CD4-positive, alpha-beta T cell (primary cell): ENCODE measurements at regions of chr11 and their contacts with region 1.

Region 1: DNA sequence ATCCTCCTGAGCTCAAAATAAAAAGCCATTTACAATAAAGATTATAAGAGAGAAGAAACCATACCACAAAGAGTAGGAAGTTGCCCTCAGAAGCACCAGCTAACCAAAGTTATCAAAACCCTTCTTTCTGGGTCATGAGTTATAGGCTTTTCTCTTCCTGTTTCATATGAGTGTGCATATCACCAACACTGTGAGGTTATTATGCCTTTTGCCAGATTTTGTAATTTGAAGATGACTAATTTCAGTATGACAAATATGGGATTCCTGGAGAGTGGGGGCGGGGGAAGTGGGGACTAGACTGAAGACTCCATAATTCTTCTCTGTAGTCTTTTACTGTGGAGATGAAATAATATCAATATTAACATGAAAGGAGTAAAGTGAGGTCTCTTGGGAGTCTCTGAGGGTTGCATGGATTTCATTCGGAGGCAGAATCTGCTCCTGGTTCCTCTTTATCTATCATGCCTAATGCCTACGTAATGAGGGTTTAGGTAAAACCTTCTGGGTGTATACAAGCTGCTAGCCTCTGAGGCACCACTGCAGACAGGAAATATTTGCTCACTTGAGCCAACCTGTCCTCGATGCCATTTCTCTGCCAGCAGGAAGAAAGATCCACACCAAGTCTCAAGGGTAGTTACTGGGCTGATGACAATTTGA is 2.1 kb downstream of the LPXN start:
- DNase-seq: peak in 12 of 14 experiments; percentile 20 to 78 (median 50)
- ATAC-seq: peak; percentile 19
- H3K4me3 ChIP-seq: peak overlapping the region; percentile 63
- H3K4me3 Mint-ChIP-seq: peak overlapping the region; percentile 95
- H3K27ac ChIP-seq: peak overlapping the region; percentile 100
- H3K27ac Mint-ChIP-seq: peak overlapping the region; percentile 99
- H3K4me1 ChIP-seq: peaks cover 36% of the 10 kb centered on the region
- H3K4me1 Mint-ChIP-seq: peaks cover 71% of the 10 kb centered on the region
- H3K27me3 ChIP-seq: no peaks in the 10 kb centered on the region
- H3K27me3 Mint-ChIP-seq: no peaks in the 10 kb centered on the region
- CTCF ChIP-seq: no peak

Region 2: DNA sequence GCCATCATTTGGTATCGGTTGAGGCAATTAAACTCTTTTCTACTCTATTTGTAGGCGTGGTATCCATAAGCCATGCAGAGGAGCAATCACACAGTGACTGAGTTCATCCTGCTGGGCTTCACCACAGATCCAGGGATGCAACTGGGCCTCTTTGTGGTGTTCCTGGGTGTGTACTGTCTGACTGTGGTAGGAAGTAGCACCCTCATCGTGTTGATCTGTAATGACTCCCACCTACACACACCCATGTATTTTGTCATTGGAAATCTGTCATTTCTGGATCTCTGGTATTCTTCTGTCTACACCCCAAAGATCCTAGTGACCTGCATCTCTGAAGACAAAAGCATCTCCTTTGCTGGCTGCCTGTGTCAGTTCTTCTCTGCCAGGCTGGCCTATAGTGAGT is 1833.5 kb before region 1 on chr11:
- CTCF ChIA-PET with region 1: no interaction called
- POLR2A ChIA-PET with region 1: no interaction called
- intact Hi-C with region 1: no loop called
- DNase-seq: no peak
- ATAC-seq: no peak
- H3K4me3 ChIP-seq: no peak overlapping the region
- H3K4me3 Mint-ChIP-seq: no peak overlapping the region
- H3K27ac ChIP-seq: no peak overlapping the region
- H3K27ac Mint-ChIP-seq: no peak overlapping the region
- H3K4me1 ChIP-seq: no peaks in the 10 kb centered on the region
- H3K4me1 Mint-ChIP-seq: no peaks in the 10 kb centered on the region
- H3K27me3 ChIP-seq: no peaks in the 10 kb centered on the region
- H3K27me3 Mint-ChIP-seq: no peaks in the 10 kb centered on the region
- CTCF ChIP-seq: no peak

Region 3: DNA sequence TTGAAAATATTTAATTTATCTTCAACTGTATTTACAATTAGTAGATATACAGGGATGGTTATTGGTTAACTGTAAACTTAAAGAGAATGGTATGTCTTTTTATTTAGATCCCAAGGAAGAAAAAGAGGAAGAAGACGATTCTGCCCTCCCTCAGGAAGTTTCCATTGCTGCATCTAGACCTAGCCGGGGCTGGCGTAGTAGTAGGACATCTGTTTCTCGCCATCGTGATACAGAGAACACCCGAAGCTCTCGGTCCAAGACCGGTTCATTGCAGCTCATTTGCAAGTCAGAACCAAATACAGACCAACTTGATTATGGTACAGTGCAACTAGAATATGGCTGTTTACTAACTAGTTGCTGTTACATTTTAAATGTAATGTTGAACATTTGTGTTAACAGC is 36.1 kb after region 1 on chr11:
- CTCF ChIA-PET with region 1: interaction called, 5 read pairs
- POLR2A ChIA-PET with region 1: interaction called, 4 read pairs
- intact Hi-C with region 1: loop called in 1 of 2 experiments (anchors 5 kb)
- DNase-seq: no peak
- ATAC-seq: no peak
- H3K4me3 ChIP-seq: no peak overlapping the region
- H3K4me3 Mint-ChIP-seq: no peak overlapping the region
- H3K27ac ChIP-seq: no peak overlapping the region
- H3K27ac Mint-ChIP-seq: no peak overlapping the region
- H3K4me1 ChIP-seq: peaks cover 4% of the 10 kb centered on the region
- H3K4me1 Mint-ChIP-seq: peaks cover 44% of the 10 kb centered on the region
- H3K27me3 ChIP-seq: no peaks in the 10 kb centered on the region
- H3K27me3 Mint-ChIP-seq: no peaks in the 10 kb centered on the region
- CTCF ChIP-seq: no peak